ENCODE measurements at regions of chr13 and their contacts with region 1.

Region 1: GRCh38 chr13:109869312-109870237 is 83.2 kb upstream of the IRS2 start:
- DNase-seq: peak; percentile 67
- H3K4me3 Mint-ChIP-seq: peak overlapping the region; percentile 29
- H3K27ac Mint-ChIP-seq: no peak overlapping the region
- H3K4me1 Mint-ChIP-seq: peaks cover 10% of the 10 kb centered on the region
- H3K27me3 Mint-ChIP-seq: peaks cover 42% of the 10 kb centered on the region

Region 2: DNA sequence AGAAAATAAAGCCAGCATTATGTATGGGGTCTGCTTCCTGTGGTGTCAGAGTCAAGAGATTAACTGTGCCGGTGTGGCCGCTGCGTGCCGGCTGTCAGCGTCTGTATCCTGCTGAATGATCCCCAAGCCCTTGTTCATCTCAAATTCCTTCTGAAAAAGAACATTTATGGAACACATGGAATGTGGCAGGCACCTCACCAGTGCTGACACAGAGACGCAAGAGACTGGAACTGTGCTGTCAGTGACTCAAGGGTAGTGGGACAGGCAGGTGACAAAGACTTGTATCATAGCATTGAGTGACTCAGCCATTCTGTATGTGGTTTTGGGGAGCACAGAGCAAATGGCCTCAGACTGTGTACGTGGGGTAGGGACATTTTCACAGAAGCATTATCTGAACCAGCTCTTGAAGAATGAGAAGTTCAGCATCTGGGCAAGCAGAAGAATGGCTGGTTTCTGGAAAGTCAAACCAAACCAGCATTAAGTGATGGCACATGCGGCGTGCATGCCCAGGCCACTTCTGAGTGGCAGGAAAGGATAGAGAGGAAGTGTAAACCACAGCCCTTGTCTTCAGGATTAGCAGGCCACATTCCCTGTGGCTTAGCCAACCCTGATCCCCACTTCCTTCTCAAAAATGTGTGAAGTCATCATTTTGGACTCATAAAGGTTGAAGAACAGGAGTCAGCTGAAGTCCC is 29.2 kb before region 1 on chr13:
- CTCF ChIA-PET with region 1: no interaction called
- intact Hi-C with region 1: loop called (anchors 1 kb)
- DNase-seq: peak; percentile 47
- H3K4me3 Mint-ChIP-seq: no peak overlapping the region
- H3K27ac Mint-ChIP-seq: peak overlapping the region; percentile 12
- H3K4me1 Mint-ChIP-seq: peaks cover 8% of the 10 kb centered on the region
- H3K27me3 Mint-ChIP-seq: peaks cover 40% of the 10 kb centered on the region

Region 3: DNA sequence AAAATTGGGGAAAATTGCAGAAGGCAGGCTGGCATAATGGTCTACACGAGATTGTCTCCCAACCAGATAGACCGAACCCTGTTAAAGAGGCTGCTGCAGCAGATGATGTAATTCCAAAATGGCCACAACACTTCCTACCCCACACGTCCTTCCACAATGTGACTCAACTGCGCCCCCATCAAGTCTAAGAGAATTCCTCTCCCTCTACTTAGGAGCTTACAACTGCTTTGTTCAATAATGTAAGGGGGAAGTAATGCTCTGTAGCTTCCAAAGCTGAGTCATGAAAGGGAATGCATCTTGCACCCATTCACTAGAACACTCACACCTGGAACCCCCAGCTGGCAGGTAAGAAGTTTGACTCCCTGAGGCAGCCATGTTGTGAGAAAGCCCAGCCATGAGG is 34.6 kb after region 1 on chr13:
- CTCF ChIA-PET with region 1: no interaction called
- intact Hi-C with region 1: no loop called
- DNase-seq: no peak
- H3K4me3 Mint-ChIP-seq: no peak overlapping the region
- H3K27ac Mint-ChIP-seq: no peak overlapping the region
- H3K4me1 Mint-ChIP-seq: no peaks in the 10 kb centered on the region
- H3K27me3 Mint-ChIP-seq: peaks cover 10% of the 10 kb centered on the region

Measured in activated naive CD4-positive, alpha-beta T cell treated with anti-CD3 and anti-CD28 coated beads for 36 hours (primary cell).